ENCODE measurements at regions of chr1 and their contacts with region 1.

Region 1: GRCh38 chr1:246002725-246003441 is 504.2 kb downstream of the SMYD3 start:
- DNase-seq: peak; percentile 89
- H3K4me3 Mint-ChIP-seq: no peak overlapping the region
- H3K27ac Mint-ChIP-seq: no peak overlapping the region
- H3K4me1 Mint-ChIP-seq: peaks cover 19% of the 10 kb centered on the region
- H3K27me3 Mint-ChIP-seq: no peaks in the 10 kb centered on the region
- CTCF ChIP-seq: peak; percentile 89

Region 2: DNA sequence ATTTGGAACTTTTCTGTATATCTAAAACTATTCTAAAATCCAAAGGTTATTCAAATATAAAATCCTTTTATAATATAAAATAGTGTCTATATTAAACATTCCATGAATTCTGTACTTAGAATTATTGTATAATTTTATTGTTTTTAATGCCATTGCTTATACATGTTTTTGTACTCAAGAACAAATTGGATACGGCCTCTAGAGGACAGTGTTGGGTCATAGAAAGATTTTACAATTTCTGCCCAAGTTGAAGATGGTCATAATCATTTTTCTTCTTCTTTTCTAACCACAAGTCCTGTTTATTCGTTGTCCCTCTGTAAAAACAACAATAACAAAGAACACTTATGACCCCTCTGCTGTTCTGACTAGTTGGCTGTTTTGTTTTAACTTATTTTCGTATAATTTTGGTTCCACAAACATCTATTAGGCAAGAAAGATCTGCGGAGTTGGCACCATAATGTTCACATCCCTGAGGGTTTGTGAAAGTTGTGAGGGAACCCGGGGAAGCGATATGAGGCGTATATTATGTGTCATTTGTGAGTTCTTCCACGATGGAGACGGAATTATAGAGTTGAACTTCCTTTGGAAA is 923.8 kb before region 1 on chr1:
- CTCF ChIA-PET with region 1: no interaction called
- intact Hi-C with region 1: loop called (anchors 2 kb)
- DNase-seq: peak; percentile 28
- H3K4me3 Mint-ChIP-seq: no peak overlapping the region
- H3K27ac Mint-ChIP-seq: no peak overlapping the region
- H3K4me1 Mint-ChIP-seq: no peaks in the 10 kb centered on the region
- H3K27me3 Mint-ChIP-seq: no peaks in the 10 kb centered on the region
- CTCF ChIP-seq: peak; percentile 65

Region 3: DNA sequence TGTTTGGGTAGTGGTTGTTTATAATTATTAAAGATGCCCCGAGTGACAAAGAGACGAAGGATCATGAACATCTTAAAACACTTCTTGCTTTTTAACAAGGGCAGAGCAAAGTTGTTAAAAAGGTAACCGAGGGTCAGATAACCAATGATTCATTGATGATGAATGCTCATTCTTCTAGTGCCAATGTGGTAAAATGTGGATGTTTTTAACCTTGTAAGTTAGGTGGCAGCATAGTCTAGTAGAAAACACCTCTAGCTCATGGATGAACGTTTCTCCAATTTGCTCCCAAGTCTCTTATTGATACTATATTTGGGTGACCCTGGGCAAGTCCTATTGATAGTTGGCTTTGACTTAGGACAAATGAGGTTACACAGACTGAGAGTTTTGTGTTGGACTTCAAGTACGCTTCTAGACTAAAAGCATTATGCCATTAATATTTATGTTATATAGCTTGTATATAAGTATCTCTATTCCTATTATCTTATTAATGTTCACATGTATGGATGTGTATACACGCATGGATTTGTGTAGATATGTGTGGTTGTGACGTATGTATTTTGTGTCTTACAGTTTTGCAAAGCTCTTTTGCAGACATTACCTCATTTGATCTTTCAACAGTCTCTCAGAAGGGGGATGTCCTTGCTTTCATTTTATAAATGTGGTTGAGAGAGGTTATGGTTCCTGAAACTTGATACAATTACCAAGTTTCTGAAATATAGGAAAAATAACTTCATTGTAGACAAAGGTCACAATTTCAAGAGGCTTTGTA is 680.0 kb before region 1 on chr1:
- CTCF ChIA-PET with region 1: no interaction called
- intact Hi-C with region 1: loop called (anchors 1 kb)
- DNase-seq: no peak
- H3K4me3 Mint-ChIP-seq: no peak overlapping the region
- H3K27ac Mint-ChIP-seq: no peak overlapping the region
- H3K4me1 Mint-ChIP-seq: no peaks in the 10 kb centered on the region
- H3K27me3 Mint-ChIP-seq: peaks cover 10% of the 10 kb centered on the region
- CTCF ChIP-seq: no peak

Region 4: DNA sequence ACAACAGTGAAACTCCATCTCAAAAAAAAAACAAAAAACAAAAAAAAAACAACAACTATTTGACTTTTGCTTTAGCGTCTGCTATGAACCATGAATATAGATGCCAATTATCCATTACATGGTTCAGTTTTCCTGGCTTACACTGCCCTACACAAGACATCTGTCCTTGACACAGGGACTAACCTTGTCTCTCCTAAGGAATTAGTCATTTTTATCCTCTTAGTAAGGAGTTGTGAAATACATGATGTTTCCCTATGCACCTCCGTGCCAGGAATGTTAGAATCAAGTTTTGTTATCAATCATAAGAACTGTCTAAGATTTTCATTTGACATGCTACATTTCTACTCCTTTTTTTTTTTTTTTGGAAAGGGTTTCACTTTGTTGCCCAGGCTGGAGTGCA is 606.3 kb before region 1 on chr1:
- CTCF ChIA-PET with region 1: no interaction called
- intact Hi-C with region 1: loop called (anchors 10 kb)
- DNase-seq: no peak
- H3K4me3 Mint-ChIP-seq: no peak overlapping the region
- H3K27ac Mint-ChIP-seq: no peak overlapping the region
- H3K4me1 Mint-ChIP-seq: no peaks in the 10 kb centered on the region
- H3K27me3 Mint-ChIP-seq: no peaks in the 10 kb centered on the region
- CTCF ChIP-seq: no peak

Region 5: GRCh38 chr1:245858722-245859492 is 144.0 kb before region 1 on chr1:
- CTCF ChIA-PET with region 1: no interaction called
- intact Hi-C with region 1: loop called (anchors 5 kb)
- DNase-seq: no peak
- H3K4me3 Mint-ChIP-seq: no peak overlapping the region
- H3K27ac Mint-ChIP-seq: no peak overlapping the region
- H3K4me1 Mint-ChIP-seq: peaks cover 46% of the 10 kb centered on the region
- H3K27me3 Mint-ChIP-seq: no peaks in the 10 kb centered on the region
- CTCF ChIP-seq: no peak